Lower lobe of right lung (tissue), 2 donors: ENCODE measurements at regions of chr12 and their contacts with region 1.

Region 1: GRCh38 chr12:10235761-10236631 is 23.3 kb downstream of the GABARAPL1 start:
- DNase-seq: no peak
- ATAC-seq: peak; percentile 81 to 87
- H3K4me3 ChIP-seq: no peak overlapping the region
- H3K27ac ChIP-seq: no peak overlapping the region
- H3K4me1 ChIP-seq: peaks cover 4% of the 10 kb centered on the region
- H3K27me3 ChIP-seq: no peaks in the 10 kb centered on the region
- CTCF ChIP-seq: peak; percentile 92

Region 2: GRCh38 chr12:10182354-10183061 is 53.5 kb before region 1 on chr12:
- intact Hi-C with region 1: no loop called
- DNase-seq: no peak
- ATAC-seq: peak; percentile 63 to 68
- H3K4me3 ChIP-seq: no peak overlapping the region
- H3K27ac ChIP-seq: peak overlapping the region; percentile 44
- H3K4me1 ChIP-seq: no peaks in the 10 kb centered on the region
- H3K27me3 ChIP-seq: no peaks in the 10 kb centered on the region
- CTCF ChIP-seq: no peak

Region 3: DNA sequence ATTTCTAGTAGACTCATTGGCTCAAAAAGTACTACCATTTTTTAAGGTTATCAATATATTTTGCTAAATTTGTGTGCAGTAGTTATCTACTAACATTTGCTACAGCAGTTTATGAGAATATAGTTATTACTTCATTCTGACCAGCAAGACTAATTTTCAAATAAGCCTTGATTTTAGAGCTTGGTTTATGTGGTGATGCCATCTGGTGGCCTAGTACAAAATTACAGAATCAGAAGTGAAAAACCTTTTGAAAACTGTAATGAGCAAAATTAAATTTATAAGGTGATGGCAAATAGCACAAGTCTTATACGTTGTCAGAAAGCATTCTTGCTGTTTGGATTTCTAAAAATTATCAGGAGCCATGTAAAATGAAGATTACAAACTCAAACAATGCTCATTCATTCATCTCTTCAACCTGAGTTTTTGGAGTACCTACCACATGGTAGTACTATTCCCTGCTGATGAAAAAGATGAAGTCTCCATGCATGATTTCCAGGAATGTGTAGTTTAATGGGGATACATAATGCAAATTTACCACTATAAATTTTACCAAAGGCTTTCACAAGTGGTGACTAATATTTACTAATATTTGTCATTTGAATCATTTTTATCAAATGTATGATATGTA is 326.4 kb after region 1 on chr12:
- intact Hi-C with region 1: loop called (anchors 5 kb)
- DNase-seq: no peak
- ATAC-seq: peak in 1 of 2 donors; percentile 61
- H3K4me3 ChIP-seq: no peak overlapping the region
- H3K27ac ChIP-seq: no peak overlapping the region
- H3K4me1 ChIP-seq: no peaks in the 10 kb centered on the region
- H3K27me3 ChIP-seq: peaks cover 3% of the 10 kb centered on the region
- CTCF ChIP-seq: peak; percentile 74